CD14-positive monocyte (primary cell): ENCODE measurements at regions of chr20 and their contacts with region 1.

Region 1: DNA sequence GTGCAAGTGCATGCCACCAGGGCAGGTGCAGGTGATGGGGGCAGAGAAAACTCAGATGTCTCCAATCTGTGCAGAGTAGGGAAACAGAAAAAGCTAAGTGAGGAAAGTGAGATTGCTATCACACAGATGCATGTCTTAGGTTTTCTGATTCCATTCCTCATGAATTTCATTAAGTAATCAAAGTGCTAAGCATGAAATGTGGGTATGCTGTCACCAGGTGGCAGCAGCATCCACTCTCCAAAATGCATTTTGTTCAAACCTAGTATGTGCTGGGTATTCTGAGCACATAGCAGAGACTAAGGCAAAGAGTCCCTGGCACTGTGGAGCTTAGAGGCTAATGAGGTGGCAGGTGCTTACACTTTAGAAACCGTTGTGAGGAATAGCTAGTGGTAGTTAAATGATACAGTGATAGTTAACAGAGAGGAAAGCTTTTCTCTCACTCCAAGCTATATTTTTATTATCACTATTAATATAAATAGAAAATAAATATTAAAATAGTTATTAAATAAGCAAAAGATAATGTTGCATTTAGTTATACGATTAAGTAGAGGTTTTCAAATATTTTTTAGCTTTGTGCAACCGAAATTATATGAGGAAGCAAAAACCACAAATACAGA is 179.5 kb downstream of the CDH26 start:
- DNase-seq: peak; percentile 42 to 66 (median 64)
- H3K4me3 ChIP-seq: peak overlapping the region; percentile 46 to 71 (median 55)
- H3K4me3 Mint-ChIP-seq: peak overlapping the region; percentile 78 to 92
- H3K27ac ChIP-seq: peak overlapping the region; percentile 55 to 77
- H3K27ac Mint-ChIP-seq: peak overlapping the region; percentile 64 to 96 (median 91)
- H3K4me1 ChIP-seq: peaks cover 60 to 70% of the 10 kb centered on the region in 2 donors
- H3K4me1 Mint-ChIP-seq: peaks cover 79% of the 10 kb centered on the region
- H3K27me3 ChIP-seq: no peaks in the 10 kb centered on the region
- H3K27me3 Mint-ChIP-seq: peaks cover 0 to 7% (median 4%) of the 10 kb centered on the region in 3 donors
- CTCF ChIP-seq: peak; percentile 87

Region 2: GRCh38 chr20:60078351-60079250 is 59.1 kb before region 1 on chr20:
- intact Hi-C with region 1: no loop called
- DNase-seq: peak; percentile 40 to 61 (median 47)
- H3K4me3 ChIP-seq: peak overlapping the region in 1 of 3 experiments; percentile 24
- H3K4me3 Mint-ChIP-seq: peak overlapping the region in 1 of 2 donors; percentile 17
- H3K27ac ChIP-seq: peak overlapping the region; percentile 58 to 79
- H3K27ac Mint-ChIP-seq: peak overlapping the region; percentile 40 to 86 (median 82)
- H3K4me1 ChIP-seq: peaks cover 42 to 47% of the 10 kb centered on the region in 2 donors
- H3K4me1 Mint-ChIP-seq: peaks cover 45% of the 10 kb centered on the region
- H3K27me3 ChIP-seq: no peaks in the 10 kb centered on the region
- H3K27me3 Mint-ChIP-seq: peaks cover 0 to 2% (median 0%) of the 10 kb centered on the region in 3 donors
- CTCF ChIP-seq: no peak

Region 3: DNA sequence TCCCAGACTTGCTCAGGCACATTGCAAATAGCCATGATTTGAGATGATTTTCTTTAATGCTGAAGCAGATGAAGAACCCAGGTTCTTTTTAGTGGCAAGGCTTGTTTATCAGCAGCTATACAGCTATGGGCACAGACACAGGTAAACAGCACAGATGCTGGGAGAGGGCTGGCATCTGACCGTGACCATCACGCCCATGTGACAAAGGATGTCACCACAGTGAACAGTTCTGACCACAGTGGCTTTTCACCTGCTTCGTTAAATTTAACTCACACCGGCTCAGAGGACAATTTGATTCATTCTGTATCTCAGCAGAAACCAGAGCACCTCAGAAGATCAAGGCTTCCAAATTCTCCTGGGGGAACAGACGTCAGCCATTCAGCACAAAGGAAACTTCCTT is 37.0 kb before region 1 on chr20:
- intact Hi-C with region 1: loop called in 1 of 2 experiments (anchors 5 kb)
- DNase-seq: no peak
- H3K4me3 ChIP-seq: peak overlapping the region in 1 of 3 experiments; percentile 36
- H3K4me3 Mint-ChIP-seq: peak overlapping the region in 1 of 2 donors; percentile 59
- H3K27ac ChIP-seq: peak overlapping the region in 1 of 2 donors; percentile 83
- H3K27ac Mint-ChIP-seq: peak overlapping the region; percentile 68 to 93 (median 83)
- H3K4me1 ChIP-seq: peaks cover 69 to 80% of the 10 kb centered on the region in 2 donors
- H3K4me1 Mint-ChIP-seq: peaks cover 74% of the 10 kb centered on the region
- H3K27me3 ChIP-seq: no peaks in the 10 kb centered on the region
- H3K27me3 Mint-ChIP-seq: peaks cover 0 to 1% (median 0%) of the 10 kb centered on the region in 3 donors
- CTCF ChIP-seq: no peak

Region 4: DNA sequence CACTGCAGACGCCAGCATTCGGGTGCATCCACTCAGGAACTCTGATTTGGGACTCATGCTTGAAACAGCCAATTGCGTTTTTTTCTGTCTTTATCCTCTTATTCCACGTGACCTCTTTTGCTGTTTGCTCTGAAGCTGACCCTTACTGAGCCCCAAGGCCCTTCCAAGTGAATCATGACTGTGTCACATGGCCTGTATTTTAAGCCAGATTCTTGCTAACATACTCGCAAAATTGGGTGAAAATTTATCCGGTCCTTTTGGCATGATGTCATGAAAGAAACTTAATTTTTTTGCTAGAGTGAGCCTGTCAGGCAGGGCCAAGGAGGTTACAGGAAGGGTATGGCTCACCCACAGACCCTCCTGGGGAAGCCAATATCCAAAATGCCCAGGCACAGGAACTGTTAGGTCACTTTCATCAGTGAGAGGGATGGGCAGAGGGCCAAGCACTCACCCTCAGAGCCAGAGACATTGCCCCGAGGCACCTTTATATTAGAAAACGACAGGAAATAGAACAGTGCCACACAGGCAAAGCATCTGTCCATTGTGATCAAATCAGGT is 117.2 kb after region 1 on chr20:
- intact Hi-C with region 1: loop called in 1 of 2 experiments (anchors 10 kb)
- DNase-seq: no peak
- H3K4me3 ChIP-seq: no peak overlapping the region
- H3K4me3 Mint-ChIP-seq: no peak overlapping the region
- H3K27ac ChIP-seq: no peak overlapping the region
- H3K27ac Mint-ChIP-seq: peak overlapping the region in 1 of 7 donors; percentile 27
- H3K4me1 ChIP-seq: no peaks in the 10 kb centered on the region
- H3K4me1 Mint-ChIP-seq: no peaks in the 10 kb centered on the region
- H3K27me3 ChIP-seq: no peaks in the 10 kb centered on the region
- H3K27me3 Mint-ChIP-seq: peaks cover 0 to 2% (median 0%) of the 10 kb centered on the region in 3 donors
- CTCF ChIP-seq: no peak